SK-N-SH (cell line): ENCODE measurements at regions of chr19 and their contacts with region 1.

Region 1: DNA sequence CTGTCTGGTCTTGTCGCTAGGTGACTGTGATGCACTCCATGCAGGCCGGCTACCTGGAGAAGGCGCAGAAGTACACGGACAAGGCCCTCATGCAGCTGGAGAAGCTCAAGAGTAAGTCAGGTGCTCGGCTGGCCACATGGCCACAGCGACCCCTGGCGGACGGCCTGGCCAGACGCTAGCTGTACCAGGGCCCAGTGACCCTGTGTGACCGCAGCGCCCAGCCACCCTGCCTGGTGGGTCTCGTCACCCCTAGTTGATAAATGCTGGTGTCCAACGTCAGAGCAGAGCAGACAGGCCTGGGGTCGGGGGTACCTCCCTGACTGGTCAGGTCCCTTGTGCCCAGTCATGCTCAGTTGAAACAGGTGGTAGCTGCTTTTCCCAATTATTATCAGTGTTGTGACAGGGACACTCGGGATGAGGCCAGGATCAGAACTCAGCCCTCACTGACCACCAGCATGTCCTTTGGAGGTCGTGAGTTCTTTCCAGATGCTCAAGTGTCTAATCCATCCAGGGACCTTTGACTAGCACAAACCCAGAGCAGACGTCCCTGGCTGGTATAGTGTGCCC is 22.2 kb downstream of the MAU2 start:
- DNase-seq: peak; percentile 94
- H3K4me3 ChIP-seq: peak overlapping the region in 1 of 2 experiments; percentile 44; a peak in 1 of 4 replicates
- H3K27ac ChIP-seq: no peak overlapping the region
- H3K4me1 ChIP-seq: no peaks in the 10 kb centered on the region
- H3K27me3 ChIP-seq: no peaks in the 10 kb centered on the region
- CTCF ChIP-seq: peak; percentile 91
- EP300 ChIP-seq: no peak
- RAD21 ChIP-seq: peak; percentile 70

Region 2: DNA sequence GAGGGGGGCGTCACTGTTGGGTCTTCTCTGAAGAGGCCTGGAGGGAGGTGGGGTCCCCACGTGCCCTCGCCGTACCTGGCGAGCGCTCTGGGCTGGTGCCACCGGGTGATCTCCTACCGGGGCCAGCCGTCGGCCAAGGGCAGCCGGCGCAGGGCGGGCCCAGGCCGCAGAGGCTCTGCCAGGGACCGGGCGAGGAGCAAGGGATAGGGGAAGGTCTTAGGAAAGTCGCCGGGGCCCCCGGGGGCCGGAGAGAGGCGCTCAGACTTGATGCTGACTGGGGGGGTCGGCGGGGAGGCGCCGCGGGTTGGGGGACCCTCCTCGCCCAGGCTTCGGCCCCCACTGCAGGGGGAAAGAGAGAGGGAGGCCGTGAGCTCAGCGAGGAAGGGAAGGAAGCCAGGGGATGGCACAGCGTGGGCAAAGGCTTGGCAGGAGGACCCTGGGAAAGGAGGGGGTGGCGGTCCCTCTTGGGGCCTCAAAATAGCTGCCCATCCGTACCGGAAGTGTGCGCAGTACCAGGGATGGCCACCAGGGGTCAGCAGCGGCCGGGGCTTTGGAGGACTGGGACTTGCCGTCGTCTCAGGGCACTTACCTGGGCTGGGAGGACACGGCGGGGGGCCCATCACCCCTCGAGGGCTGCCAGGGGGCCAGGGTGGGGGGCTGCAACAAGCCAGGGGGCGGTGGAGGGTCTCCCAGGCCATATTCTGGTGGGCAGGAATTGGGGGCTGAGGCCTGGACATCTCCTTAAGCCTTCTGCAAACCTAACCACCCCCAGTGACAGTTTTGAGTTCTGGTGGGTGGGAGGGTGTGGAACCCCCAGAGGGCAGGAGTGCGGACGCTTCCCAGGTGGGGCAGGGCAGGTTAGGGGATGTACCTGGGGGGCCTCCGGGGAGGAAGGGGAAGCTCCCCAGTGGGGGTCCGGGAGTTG is 196.9 kb before region 1 on chr19:
- CTCF ChIA-PET with region 1: interaction called, 19 read pairs
- POLR2A ChIA-PET with region 1: no interaction called
- DNase-seq: peak; percentile 93
- H3K4me3 ChIP-seq: no peak overlapping the region
- H3K27ac ChIP-seq: no peak overlapping the region
- H3K4me1 ChIP-seq: no peaks in the 10 kb centered on the region; a peak in 1 of 4 replicates
- H3K27me3 ChIP-seq: no peaks in the 10 kb centered on the region
- CTCF ChIP-seq: peak; percentile 83
- EP300 ChIP-seq: no peak
- RAD21 ChIP-seq: peak; percentile 79

Region 3: DNA sequence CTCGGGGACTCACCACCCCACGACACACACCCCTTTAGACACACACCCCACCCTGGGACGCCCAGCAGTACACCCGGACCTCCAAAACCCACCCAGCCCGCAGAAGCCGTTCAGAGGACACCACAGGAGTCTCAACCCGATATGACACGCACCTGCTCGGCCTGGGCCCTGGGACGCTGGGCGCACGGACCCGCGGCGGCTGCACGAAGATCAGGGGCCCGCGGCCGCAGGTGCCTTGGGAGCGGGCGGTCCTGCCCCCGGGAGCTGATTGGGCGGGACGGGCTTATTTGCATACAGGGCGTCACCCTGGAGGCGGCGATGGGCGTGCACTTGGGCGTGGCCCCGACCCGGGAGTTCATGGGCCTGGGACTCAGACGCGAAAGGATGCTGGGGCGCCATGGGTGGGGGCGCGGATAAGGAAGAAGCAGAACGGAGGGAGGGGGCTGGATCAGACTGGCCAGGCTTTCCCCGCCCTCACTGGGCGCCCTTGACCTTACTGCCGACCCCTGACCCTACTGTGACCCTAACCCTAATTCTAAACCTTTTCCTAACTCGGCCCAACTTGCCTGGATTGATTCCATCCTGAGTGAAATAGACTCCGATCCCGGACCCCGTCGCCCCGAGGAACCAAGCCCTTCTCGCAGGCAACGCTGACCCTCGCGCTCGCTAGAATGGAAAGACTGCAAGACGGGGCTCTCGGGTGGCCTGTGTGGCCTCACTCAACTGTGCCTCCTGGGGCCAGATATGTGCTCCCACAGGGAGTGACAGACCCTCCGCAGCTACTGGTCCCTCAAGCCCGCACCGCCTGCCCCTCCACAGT is 172.6 kb before region 1 on chr19 and contains the start of gene MEF2B:
- CTCF ChIA-PET with region 1: interaction called, 11 read pairs
- POLR2A ChIA-PET with region 1: no interaction called
- DNase-seq: peak; percentile 96
- H3K4me3 ChIP-seq: peak within 1 kb of the TSS in 1 of 2 experiments; percentile 21; a peak in 1 of 4 replicates
- H3K27ac ChIP-seq: no peak within 1 kb of the TSS
- H3K4me1 ChIP-seq: peaks cover 0 to 2% of the 10 kb centered on the region in 2 experiments; a peak in 2 of 4 replicates
- H3K27me3 ChIP-seq: no peaks in the 10 kb centered on the region
- CTCF ChIP-seq: no peak
- EP300 ChIP-seq: no peak
- RAD21 ChIP-seq: no peak
- polyA plus RNA-seq, gene MEF2B: 1.0 and 1.1 TPM in 2 replicates

Region 4: DNA sequence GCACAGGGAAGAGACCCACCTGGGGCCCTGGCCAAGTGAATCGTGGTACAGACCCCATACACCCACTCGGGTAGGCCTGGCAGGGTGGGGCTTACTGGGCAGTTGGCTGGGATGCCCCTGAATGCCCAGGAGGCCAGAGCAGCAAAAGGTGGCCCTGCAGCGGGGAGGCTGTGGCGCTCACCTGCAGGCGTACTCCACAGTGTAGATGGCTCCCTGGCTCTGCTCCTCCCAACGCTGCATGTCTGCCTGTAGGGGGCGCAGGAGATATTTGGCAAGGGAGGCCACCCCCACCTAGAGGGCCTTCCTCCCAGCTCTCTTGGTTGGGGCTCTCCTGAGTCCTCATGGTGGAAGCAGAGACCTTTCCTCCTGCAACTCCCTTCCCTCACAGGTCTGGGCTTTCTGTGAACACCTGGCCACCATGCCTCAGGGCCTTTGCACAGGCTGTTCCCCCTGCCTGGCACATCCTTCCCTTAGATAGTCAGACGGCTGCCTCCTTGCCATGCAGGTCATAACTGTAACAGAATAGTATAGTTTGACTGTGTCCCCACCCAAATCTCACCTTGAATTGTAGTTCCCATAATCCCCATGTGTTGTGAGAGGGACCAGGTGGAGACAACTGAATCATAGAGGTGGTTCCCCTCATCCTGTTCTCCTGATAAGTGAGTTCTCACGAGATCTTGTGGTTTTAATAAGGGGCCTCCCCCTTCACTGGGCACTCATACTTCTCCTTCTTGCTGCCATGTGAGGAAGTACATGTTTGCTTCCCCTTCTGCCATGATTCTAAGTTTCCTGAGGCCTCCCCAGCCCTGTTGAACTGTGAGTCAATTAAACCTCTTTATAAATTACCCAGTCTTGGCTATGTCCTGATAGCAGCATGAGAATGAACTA is 156.7 kb before region 1 on chr19:
- CTCF ChIA-PET with region 1: interaction called, 20 read pairs
- POLR2A ChIA-PET with region 1: no interaction called
- DNase-seq: peak; percentile 83
- H3K4me3 ChIP-seq: no peak overlapping the region; a peak in 1 of 4 replicates
- H3K27ac ChIP-seq: no peak overlapping the region
- H3K4me1 ChIP-seq: peaks cover 6 to 8% of the 10 kb centered on the region in 2 experiments; a peak in 2 of 4 replicates
- H3K27me3 ChIP-seq: no peaks in the 10 kb centered on the region
- CTCF ChIP-seq: peak; percentile 72
- EP300 ChIP-seq: no peak
- RAD21 ChIP-seq: peak; percentile 67

Region 5: DNA sequence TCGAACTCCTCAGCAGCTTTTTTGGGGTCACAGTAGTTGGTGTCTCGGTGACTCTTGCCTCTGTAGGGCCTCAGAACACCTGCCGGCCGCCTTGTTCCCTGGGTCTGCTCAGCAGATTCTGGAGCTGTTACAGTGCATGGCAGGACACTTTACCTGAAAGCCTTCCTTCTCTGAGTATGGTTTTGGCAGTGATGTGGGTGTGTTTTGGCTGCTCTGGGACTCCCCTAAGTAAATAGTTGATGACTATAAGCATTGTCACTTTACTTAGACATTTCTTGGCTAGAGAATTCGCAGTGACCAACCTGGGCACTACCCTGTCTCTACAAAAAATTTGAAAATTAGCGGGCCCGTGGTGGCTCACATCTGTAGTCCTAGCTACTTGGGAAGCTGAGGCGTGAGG is 15.2 kb before region 1 on chr19:
- CTCF ChIA-PET with region 1: interaction called, 55 read pairs
- POLR2A ChIA-PET with region 1: interaction called, 6 read pairs
- DNase-seq: no peak
- H3K4me3 ChIP-seq: no peak overlapping the region
- H3K27ac ChIP-seq: no peak overlapping the region
- H3K4me1 ChIP-seq: no peaks in the 10 kb centered on the region
- H3K27me3 ChIP-seq: no peaks in the 10 kb centered on the region
- CTCF ChIP-seq: no peak
- EP300 ChIP-seq: no peak
- RAD21 ChIP-seq: no peak

Region 6: GRCh38 chr19:19361075-19361594 is 18.3 kb after region 1 on chr19:
- CTCF ChIA-PET with region 1: interaction called, 25 read pairs
- POLR2A ChIA-PET with region 1: no interaction called
- DNase-seq: peak; percentile 84
- H3K4me3 ChIP-seq: no peak overlapping the region
- H3K27ac ChIP-seq: no peak overlapping the region
- H3K4me1 ChIP-seq: no peaks in the 10 kb centered on the region
- H3K27me3 ChIP-seq: no peaks in the 10 kb centered on the region
- CTCF ChIP-seq: peak; percentile 76
- EP300 ChIP-seq: no peak
- RAD21 ChIP-seq: peak; percentile 55